ENCODE measurements at regions of chr5 and their contacts with region 1.

Region 1: DNA sequence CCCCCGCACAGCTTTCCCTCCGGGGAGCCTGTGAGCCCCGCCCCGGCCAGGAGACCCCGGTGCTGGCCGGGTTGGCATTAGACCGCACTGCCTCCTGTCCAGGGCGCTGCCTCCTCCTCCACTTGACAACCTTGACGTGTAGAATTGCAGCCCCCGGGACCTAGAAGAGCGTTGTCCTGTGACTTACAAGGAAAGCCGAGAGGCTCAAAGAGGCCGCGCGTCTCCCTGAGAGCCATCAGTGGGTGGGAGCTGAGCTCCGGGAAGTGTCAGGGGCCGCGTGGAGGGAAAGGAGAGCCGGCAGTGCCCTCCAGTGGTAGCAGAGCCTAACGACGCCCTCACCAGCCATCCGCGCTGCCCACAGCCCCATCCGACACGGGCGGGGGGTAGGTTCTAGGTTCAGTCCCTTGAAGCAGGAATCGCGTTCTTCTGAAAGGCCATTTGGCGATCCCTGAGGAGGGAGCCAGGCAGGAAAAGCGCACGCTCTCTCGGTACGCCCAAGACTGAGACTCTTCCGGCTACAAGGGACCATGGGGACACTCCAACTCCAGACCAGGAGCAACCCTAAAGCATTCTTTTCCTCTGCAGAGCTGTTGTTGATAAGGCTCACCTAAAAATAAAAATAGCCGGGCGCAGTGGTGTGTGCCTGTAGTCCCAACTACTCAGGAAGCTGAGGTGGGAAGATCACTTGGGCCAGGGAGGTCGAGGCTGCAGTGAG is 40.6 kb upstream of the SAP30L start:
- DNase-seq: no peak
- H3K4me3 ChIP-seq: peak overlapping the region; percentile 27; the same call in 1 of the 2 replicates
- H3K27me3 ChIP-seq: no peaks in the 10 kb centered on the region
- CTCF ChIP-seq: peak; percentile 89

Region 2: DNA sequence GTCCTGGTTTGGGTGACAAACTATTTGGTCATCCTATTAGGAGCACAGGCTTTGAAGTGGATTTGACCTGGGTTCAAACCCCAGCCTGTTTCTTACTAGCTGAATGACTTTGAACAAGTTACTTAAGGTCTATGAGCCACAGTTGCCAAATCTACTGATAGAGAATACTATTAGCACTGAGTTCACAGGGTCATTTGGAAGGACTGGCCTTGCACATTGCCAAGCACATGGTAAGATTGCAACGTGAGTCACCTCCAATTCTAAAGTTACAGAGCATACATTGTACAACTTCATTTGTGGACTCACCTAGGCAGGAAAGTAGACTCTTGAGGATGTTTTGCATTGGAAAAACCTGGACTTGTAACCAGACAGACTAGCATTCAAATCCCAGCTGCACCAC is 327.5 kb before region 1 on chr5:
- CTCF ChIA-PET with region 1: interaction called, 112 read pairs
- POLR2A ChIA-PET with region 1: no interaction called
- DNase-seq: no peak
- H3K4me3 ChIP-seq: no peak overlapping the region
- H3K27me3 ChIP-seq: no peaks in the 10 kb centered on the region
- CTCF ChIP-seq: no peak

Region 3: DNA sequence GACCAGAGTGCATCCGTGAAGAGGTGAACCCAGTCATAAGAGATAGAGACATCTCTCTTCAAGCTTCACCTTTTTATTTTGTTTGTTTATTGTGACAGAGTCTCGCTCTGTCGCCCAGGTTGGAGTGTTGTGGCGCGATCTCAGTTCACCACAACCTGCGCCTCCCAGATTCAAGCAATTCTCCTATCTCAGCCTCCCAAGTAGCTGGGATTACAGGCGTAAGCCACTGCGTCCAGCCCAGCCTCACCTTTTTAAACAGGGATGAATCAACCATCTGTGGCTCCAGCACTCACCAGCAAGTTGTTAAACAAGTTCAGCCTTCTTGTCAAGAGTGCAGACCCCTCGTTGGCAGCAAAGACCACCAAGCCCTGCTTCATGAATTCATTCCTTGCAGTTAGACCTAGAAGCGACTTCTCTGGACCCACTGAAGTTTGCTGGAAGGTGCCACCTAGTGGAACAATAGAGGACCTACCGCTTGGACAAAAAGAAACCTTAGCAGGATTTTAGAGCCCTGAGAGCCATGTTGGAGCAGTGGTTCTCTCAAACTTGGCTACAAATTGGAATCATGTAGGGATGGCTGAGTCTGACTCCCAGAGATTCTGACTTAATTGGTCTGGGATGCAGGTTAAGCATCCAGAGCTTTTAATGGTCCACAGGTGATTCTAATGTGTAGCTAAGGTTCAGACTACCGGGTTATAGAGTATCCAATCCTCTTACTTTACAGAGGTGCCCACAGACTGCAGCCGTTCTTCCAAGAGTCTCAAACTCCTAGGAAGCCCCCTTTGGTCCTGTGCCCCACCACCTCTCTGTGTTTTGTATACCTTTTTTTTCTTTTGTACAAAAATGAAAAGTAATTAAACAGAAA is 225.2 kb before region 1 on chr5:
- CTCF ChIA-PET with region 1: interaction called, 21 read pairs
- POLR2A ChIA-PET with region 1: no interaction called
- DNase-seq: no peak
- H3K4me3 ChIP-seq: no peak overlapping the region
- H3K27me3 ChIP-seq: 0 out of 2 replicates have a peak, but pooled peaks cover under 1% of the 10 kb centered on the region
- CTCF ChIP-seq: peak; percentile 87

Region 4: DNA sequence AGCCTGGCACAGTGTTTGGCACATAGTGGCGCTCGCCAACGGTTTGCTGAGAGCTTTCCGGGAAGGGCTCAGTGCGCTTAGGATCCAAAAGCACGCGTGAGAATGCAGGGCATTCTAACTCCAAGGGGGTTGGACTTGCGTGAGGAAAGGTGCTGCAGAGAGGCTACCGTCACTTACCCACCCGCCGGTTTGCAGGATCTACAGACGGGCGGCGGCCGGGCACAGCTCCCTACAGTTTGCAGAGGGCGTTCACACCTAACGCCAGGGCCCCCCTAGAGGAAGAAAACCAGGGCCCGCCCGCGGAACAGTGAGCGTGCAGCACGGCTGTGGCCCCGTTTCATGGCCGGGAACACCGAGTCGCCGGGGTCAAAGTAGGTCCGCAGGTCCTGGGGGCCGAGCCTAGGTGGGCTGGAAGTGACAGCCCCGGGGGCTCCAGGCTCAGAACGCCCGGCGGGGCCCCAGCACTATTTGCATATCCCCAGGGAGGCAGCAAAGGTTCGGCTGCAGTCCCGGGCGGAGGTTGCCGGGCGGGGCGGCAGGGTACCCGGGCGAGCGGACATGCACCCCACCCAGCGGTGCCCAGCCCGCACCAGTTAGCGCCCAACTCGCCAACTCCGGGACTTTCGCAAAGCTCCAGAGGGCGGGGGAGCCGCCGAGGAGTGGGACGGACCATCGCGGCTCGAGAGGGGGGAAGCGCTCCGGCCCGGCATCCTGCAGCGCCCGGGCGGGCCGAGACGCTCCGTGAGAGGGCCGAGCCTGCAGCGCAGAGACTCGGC is 215.2 kb before region 1 on chr5:
- CTCF ChIA-PET with region 1: interaction called, 69 read pairs
- POLR2A ChIA-PET with region 1: no interaction called
- DNase-seq: no peak
- H3K4me3 ChIP-seq: peak overlapping the region; percentile 81
- H3K27me3 ChIP-seq: no peaks in the 10 kb centered on the region
- CTCF ChIP-seq: peak; percentile 57

Region 5: DNA sequence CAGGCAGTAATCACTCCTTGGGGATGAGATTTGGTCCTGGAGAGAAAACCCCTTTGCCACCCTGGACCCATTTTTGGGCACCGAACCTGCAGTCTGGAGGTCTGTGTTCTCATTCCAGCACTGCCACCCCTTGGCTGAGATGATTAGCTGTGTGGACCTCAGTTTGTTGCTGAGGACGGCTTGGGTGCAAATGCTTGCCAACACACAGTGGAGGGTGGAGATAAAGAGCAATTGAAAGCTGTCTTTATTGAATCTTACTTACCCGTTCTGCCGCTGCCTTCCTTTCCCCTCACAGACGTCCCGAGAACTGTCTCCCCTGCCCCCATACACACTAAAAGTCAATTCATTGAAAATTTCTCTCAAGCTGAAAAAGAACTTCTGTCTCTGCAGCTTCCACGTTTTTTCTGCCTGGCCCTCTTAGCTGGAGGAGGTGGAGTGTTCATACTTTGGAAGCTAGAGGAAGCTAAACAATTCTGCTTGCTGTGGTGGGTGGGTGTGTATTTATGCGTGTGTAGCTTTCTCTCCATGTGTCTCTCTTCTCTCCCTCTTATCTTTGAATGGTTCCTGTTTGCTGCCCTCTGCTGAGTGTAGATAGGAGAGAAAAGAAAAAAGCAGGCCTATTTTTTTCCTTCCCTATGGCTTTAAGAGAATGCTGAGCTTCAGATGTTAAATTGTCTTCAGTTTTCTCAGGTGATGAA is 208.1 kb before region 1 on chr5:
- CTCF ChIA-PET with region 1: interaction called, 69 read pairs
- POLR2A ChIA-PET with region 1: no interaction called
- DNase-seq: no peak
- H3K4me3 ChIP-seq: no peak overlapping the region
- H3K27me3 ChIP-seq: no peaks in the 10 kb centered on the region
- CTCF ChIP-seq: peak; percentile 51

Region 6: GRCh38 chr5:154487541-154487940 is 82.3 kb after region 1 on chr5:
- CTCF ChIA-PET with region 1: no interaction called
- POLR2A ChIA-PET with region 1: no interaction called
- DNase-seq: no peak
- H3K4me3 ChIP-seq: no peak overlapping the region
- H3K27me3 ChIP-seq: peaks cover 49% of the 10 kb centered on the region
- CTCF ChIP-seq: no peak

Region 7: GRCh38 chr5:154543380-154543779 is 138.1 kb after region 1 on chr5:
- CTCF ChIA-PET with region 1: no interaction called
- POLR2A ChIA-PET with region 1: no interaction called
- DNase-seq: no peak
- H3K4me3 ChIP-seq: no peak overlapping the region
- H3K27me3 ChIP-seq: peaks cover 11% of the 10 kb centered on the region
- CTCF ChIP-seq: no peak

Region 8: DNA sequence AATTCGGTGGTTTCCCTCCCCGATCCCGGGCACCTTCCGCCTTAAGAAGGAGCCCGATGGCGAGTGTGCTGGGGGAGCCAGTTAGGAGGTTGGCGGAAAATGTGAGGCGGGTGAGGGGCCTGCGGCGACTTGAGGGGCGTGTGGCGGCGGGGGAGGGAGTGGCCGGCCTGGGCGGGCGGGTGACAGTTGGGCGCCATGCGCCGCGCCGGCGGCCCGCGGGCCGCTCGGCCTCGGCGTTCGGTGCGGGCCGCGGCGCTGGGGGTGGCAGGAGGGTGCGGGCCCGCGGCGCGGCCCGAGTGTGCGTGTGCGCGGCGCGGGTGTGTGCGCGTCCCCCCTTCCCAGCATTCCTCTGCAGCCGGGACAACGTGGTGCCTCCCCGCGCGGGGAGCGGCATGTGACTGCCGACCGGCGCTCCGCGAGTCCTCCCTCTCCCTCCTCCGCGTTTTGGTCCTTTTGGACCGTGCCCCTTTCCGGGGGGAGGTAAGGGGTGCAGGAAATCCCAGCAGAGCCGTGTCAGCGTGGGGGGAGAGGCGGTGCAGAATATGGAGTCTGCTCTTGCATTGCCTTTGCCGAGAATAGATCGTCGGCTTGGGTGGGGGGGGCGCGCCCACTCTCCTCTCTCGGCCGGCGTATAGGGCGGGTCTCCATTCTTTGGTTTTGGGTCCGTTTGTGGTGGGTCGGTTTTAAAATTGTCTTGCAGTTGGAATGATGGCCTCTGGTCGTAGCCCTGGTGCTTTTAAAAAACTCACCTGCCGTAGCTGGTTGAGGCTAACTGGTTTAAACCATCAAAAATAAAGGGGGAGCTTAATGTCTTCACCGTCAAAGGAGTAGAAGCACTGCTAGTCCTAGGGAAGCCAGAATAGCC is 351.8 kb after region 1 on chr5:
- CTCF ChIA-PET with region 1: no interaction called
- POLR2A ChIA-PET with region 1: no interaction called
- DNase-seq: no peak
- H3K4me3 ChIP-seq: peak overlapping the region; percentile 94
- H3K27me3 ChIP-seq: no peaks in the 10 kb centered on the region
- CTCF ChIP-seq: no peak